Psoas muscle (tissue), 8 donors: ENCODE measurements at regions of chr9 and their contacts with region 1.

Region 1: GRCh38 chr9:119556129-119556875 is 187.1 kb upstream of the BRINP1 start:
- DNase-seq: peak; percentile 69 to 77
- ATAC-seq: peak; percentile 68 to 92 (median 83)
- H3K4me3 ChIP-seq: peak overlapping the region; percentile 43
- H3K27ac ChIP-seq: no peak overlapping the region
- H3K4me1 ChIP-seq: no peaks in the 10 kb centered on the region
- H3K27me3 ChIP-seq: peaks cover 0 to 5% (median 1%) of the 10 kb centered on the region in 3 donors
- CTCF ChIP-seq: peak; percentile 86

Region 2: GRCh38 chr9:119458068-119458467 is 98.2 kb before region 1 on chr9:
- intact Hi-C with region 1: no loop called
- DNase-seq: no peak
- ATAC-seq: no peak
- H3K4me3 ChIP-seq: no peak overlapping the region
- H3K27ac ChIP-seq: no peak overlapping the region
- H3K4me1 ChIP-seq: no peaks in the 10 kb centered on the region
- H3K27me3 ChIP-seq: no peaks in the 10 kb centered on the region
- CTCF ChIP-seq: no peak

Region 3: DNA sequence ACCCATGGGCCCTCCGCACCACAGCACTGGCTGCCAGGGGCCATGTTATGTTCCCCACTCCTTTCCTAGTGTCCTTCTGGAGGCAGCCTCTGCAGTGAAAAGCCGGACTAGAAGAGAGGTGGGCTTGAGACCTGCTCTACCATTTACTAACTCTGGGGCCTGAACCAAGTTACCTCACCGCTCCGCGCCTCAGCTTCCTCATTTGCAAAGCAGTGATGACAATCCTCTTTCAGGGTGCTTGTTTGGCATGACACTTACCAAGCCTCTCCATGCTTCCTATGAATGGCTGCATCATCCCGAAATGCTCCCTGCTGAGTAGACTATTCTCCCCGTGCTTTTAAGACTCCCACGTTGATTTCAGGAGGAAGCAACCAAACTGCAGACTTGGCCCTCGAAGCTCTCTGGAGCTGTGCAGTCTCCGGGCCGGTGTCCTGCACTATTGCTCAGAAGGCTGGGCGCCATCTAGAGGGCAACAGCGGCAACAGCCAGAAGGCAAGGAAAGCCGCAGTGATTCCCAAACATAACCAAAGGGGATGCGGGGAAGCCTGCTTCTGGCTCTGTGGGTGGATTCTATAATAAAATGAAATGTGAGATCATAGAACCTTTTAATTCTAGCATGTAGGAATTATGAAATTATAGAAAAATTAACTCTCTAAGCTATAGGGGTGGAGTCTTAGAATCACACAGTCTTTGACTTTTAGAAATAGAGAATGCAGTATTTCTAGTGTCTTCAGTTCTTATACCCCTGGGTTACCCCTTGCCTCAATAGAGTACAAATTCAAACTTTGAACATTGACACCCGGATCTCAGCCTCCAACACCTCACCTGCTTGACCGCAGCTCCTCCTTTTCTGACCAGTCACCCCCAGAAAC is 412.8 kb after region 1 on chr9:
- intact Hi-C with region 1: loop called (anchors 2 to 10 kb)
- DNase-seq: peak; percentile 76 to 85
- ATAC-seq: peak; percentile 76 to 87 (median 86)
- H3K4me3 ChIP-seq: no peak overlapping the region
- H3K27ac ChIP-seq: no peak overlapping the region
- H3K4me1 ChIP-seq: peaks cover 3% of the 10 kb centered on the region
- H3K27me3 ChIP-seq: no peaks in the 10 kb centered on the region
- CTCF ChIP-seq: peak; percentile 85

Region 4: GRCh38 chr9:120348951-120349429 is 792.7 kb after region 1 on chr9:
- intact Hi-C with region 1: loop called (anchors 5 kb)
- DNase-seq: peak in 1 of 2 donors; percentile 52
- ATAC-seq: peak; percentile 70 to 92 (median 87)
- H3K4me3 ChIP-seq: no peak overlapping the region
- H3K27ac ChIP-seq: no peak overlapping the region
- H3K4me1 ChIP-seq: no peaks in the 10 kb centered on the region
- H3K27me3 ChIP-seq: no peaks in the 10 kb centered on the region
- CTCF ChIP-seq: peak; percentile 61

Region 5: GRCh38 chr9:120477521-120478001 is 921.3 kb after region 1 on chr9:
- intact Hi-C with region 1: loop called (anchors 5 kb)
- DNase-seq: peak; percentile 66 to 81
- ATAC-seq: peak; percentile 83 to 90 (median 86)
- H3K4me3 ChIP-seq: no peak overlapping the region
- H3K27ac ChIP-seq: peak overlapping the region; percentile 58
- H3K4me1 ChIP-seq: peaks cover 30% of the 10 kb centered on the region
- H3K27me3 ChIP-seq: no peaks in the 10 kb centered on the region
- CTCF ChIP-seq: peak; percentile 97